CD4-positive, alpha-beta memory T cell (primary cell): ENCODE measurements at regions of chr11 and their contacts with region 1.

Region 1: GRCh38 chr11:35040221-35040942 is 98.6 kb upstream of the CD44 start:
- DNase-seq: peak; percentile 78 to 93 (median 84)
- H3K4me3 ChIP-seq: peak overlapping the region; percentile 31 to 62
- H3K4me3 Mint-ChIP-seq: peak overlapping the region; percentile 80 to 93 (median 88)
- H3K27ac ChIP-seq: peak overlapping the region; percentile 94
- H3K27ac Mint-ChIP-seq: peak overlapping the region; percentile 96 to 99 (median 98)
- H3K4me1 ChIP-seq: peaks cover 68% of the 10 kb centered on the region
- H3K4me1 Mint-ChIP-seq: peaks cover 38 to 69% (median 54%) of the 10 kb centered on the region in 4 donors
- H3K27me3 ChIP-seq: no peaks in the 10 kb centered on the region
- H3K27me3 Mint-ChIP-seq: no peaks in the 10 kb centered on the region

Region 2: DNA sequence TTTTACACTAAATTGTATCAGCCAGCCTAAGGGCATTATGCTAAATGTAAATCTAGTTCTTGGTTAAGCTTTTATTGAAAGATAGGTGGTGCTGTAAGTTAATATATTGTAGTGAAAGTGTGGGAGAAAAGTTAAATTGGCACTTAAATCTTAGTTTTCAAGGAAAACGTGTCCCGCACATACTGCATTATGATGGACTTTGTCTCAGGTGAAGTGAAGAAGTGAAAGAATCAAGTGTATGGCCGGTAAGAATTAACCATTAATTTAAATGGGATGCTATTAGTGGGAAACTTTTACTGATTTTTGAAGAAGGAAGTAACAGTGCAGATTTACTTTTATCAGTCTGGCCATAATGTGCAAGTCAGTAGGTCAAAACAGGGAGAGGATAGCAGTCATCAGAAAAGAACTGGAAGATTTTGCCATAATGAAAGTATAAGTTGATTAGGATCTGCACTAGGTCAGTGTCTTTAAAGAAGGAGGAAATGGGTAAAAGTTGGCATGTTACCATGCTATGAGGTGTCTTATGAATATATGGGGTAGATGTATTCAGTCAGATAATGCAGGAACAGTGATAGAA is 42.3 kb before region 1 on chr11:
- CTCF ChIA-PET with region 1: interaction called, 10 read pairs
- POLR2A ChIA-PET with region 1: interaction called, 7 read pairs
- intact Hi-C with region 1: loop called (anchors 1 kb)
- DNase-seq: peak in 4 of 5 donors; percentile 37 to 48 (median 44)
- H3K4me3 ChIP-seq: no peak overlapping the region
- H3K4me3 Mint-ChIP-seq: peak overlapping the region in 6 of 8 donors; percentile 62 to 78 (median 75)
- H3K27ac ChIP-seq: peak overlapping the region; percentile 45
- H3K27ac Mint-ChIP-seq: peak overlapping the region; percentile 57 to 95 (median 86)
- H3K4me1 ChIP-seq: peaks cover 24% of the 10 kb centered on the region
- H3K4me1 Mint-ChIP-seq: peaks cover 20 to 34% (median 24%) of the 10 kb centered on the region in 4 donors
- H3K27me3 ChIP-seq: no peaks in the 10 kb centered on the region
- H3K27me3 Mint-ChIP-seq: no peaks in the 10 kb centered on the region

Region 3: GRCh38 chr11:35013514-35014233 is 26.7 kb before region 1 on chr11:
- CTCF ChIA-PET with region 1: interaction called, 3 read pairs
- POLR2A ChIA-PET with region 1: interaction called, 26 read pairs
- intact Hi-C with region 1: loop called (anchors 2 kb)
- DNase-seq: peak; percentile 61 to 87 (median 75)
- H3K4me3 ChIP-seq: no peak overlapping the region
- H3K4me3 Mint-ChIP-seq: peak overlapping the region; percentile 11 to 87 (median 71)
- H3K27ac ChIP-seq: peak overlapping the region; percentile 70
- H3K27ac Mint-ChIP-seq: peak overlapping the region; percentile 93 to 100 (median 97)
- H3K4me1 ChIP-seq: peaks cover 26% of the 10 kb centered on the region
- H3K4me1 Mint-ChIP-seq: peaks cover 23 to 57% (median 37%) of the 10 kb centered on the region in 4 donors
- H3K27me3 ChIP-seq: no peaks in the 10 kb centered on the region
- H3K27me3 Mint-ChIP-seq: no peaks in the 10 kb centered on the region

Region 4: DNA sequence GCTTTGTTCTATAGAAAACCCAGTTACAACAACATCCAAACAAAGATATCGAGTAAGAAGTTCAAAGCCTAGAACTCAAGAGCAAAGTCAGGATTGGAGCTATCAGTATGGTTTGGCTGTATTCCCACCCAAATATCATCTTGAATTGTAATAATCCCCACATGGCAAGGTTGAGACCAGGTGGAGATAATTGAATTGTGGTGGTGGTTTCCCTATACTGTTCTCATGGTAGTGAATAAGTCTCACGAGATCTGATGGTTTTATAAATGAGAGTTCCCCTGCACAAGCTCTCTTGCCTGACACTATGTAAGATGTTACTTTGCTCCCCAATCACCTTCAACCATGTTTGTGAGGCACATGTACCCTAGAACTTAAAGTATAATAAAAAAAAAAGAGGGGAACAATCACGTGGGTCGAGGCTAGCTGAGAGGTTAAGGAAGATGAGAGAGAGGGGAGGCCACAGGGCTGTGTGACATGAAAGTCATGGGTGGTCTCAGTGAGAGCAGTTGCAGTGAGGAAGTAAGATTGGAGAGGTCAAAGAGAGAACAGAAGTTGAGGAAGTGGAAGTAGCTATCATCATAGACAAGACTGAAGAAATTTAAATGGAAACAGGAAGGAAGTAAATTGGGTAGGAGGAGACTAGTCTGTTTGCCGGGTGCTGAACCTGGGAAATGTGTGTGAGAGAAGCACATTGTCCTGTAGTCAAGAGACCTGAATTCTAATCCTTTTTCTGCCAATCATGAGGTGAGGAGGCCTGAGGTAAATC is 18.5 kb after region 1 on chr11:
- CTCF ChIA-PET with region 1: interaction called, 4 read pairs
- POLR2A ChIA-PET with region 1: interaction called, 76 read pairs
- intact Hi-C with region 1: no loop called
- DNase-seq: no peak
- H3K4me3 ChIP-seq: no peak overlapping the region
- H3K4me3 Mint-ChIP-seq: peak overlapping the region in 7 of 8 donors; percentile 1 to 71 (median 14)
- H3K27ac ChIP-seq: no peak overlapping the region
- H3K27ac Mint-ChIP-seq: peak overlapping the region; percentile 19 to 90 (median 78)
- H3K4me1 ChIP-seq: peaks cover 40% of the 10 kb centered on the region
- H3K4me1 Mint-ChIP-seq: peaks cover 29 to 46% (median 40%) of the 10 kb centered on the region in 4 donors
- H3K27me3 ChIP-seq: no peaks in the 10 kb centered on the region
- H3K27me3 Mint-ChIP-seq: no peaks in the 10 kb centered on the region

Region 5: DNA sequence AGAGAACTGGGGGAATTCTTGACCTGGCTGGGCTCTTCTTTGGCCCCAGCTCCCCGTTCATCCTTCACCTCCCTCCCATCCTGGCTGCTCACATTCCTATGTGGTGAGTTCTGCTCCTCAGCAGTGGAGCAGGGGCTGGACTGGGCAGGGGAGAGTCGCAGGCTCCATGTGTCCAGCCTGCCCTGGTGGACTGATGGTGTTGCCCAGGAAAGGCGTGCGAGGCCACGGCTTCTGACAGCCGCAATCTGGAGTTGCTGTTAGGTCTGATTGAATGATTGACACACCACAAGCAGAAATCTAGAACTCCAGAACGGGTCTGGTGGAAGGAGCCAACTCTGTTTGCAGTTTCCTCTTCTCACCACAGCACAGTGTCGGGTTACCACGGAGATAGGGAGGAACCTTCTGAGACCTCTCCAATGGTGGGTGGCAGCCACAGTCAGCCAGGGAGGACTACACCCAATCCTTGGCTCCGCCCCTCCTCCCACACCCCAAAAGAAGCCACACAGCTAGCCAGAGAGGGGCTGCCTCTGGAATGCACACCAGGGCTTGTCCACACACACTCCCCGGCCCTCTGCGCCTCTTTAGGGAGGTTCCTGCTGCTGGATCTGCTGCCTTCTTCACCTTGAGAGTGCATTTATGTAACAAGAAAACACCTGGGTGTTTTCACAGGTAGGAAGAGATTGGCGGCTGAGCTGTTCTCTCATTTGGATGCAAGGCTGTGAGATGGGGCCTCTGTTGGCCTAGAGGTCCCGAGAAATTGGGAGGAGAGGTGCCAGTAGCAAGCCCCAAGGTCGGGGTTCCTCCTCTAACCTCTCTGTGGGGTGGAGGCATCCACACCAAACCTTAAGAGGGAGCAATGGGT is 42.2 kb after region 1 on chr11:
- CTCF ChIA-PET with region 1: interaction called, 15 read pairs
- POLR2A ChIA-PET with region 1: interaction called, 253 read pairs
- intact Hi-C with region 1: loop called (anchors 1 kb)
- DNase-seq: peak; percentile 89 to 96 (median 93)
- H3K4me3 ChIP-seq: peak overlapping the region; percentile 50 to 57
- H3K4me3 Mint-ChIP-seq: peak overlapping the region; percentile 78 to 90 (median 84)
- H3K27ac ChIP-seq: peak overlapping the region; percentile 97
- H3K27ac Mint-ChIP-seq: peak overlapping the region; percentile 94 to 99 (median 98)
- H3K4me1 ChIP-seq: peaks cover 85% of the 10 kb centered on the region
- H3K4me1 Mint-ChIP-seq: peaks cover 73 to 100% (median 87%) of the 10 kb centered on the region in 4 donors
- H3K27me3 ChIP-seq: no peaks in the 10 kb centered on the region
- H3K27me3 Mint-ChIP-seq: no peaks in the 10 kb centered on the region

Region 6: DNA sequence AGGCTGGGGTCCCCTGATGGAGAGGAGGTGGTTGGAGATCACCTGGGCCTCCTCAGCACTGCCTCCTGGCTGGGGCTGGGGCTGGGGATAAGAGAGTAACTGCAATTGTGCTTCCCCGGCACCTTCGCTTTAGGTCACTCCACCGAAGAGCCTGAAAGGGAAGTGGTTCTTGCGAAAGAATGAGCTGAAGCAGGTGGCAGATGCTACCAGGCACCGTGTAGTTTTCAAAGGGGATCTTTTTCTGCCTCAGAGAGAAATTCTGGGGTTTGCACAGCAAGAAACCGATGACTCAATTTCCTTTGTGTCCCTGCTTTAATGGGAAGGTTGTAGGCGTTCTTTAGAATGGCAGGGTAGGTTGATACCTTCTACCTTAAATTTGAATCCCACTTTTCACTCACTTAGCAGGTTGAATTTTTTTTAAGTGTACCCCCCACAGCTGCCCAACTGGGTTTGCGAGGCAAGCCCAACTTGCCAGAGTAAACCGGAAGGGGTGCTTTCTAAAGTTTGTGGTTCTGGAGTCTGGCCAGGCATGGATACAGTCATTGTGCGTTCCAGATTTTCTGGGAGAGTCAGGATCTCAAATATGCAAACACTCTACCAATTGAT is 103.9 kb after region 1 on chr11:
- CTCF ChIA-PET with region 1: interaction called, 19 read pairs
- POLR2A ChIA-PET with region 1: interaction called, 211 read pairs
- intact Hi-C with region 1: loop called (anchors 1 kb)
- DNase-seq: peak; percentile 67 to 90 (median 76)
- H3K4me3 ChIP-seq: peak overlapping the region; percentile 55 to 59
- H3K4me3 Mint-ChIP-seq: peak overlapping the region; percentile 83 to 99 (median 98)
- H3K27ac ChIP-seq: peak overlapping the region; percentile 73
- H3K27ac Mint-ChIP-seq: peak overlapping the region; percentile 93 to 100 (median 95)
- H3K4me1 ChIP-seq: peaks cover 72% of the 10 kb centered on the region
- H3K4me1 Mint-ChIP-seq: peaks cover 60 to 88% (median 70%) of the 10 kb centered on the region in 4 donors
- H3K27me3 ChIP-seq: no peaks in the 10 kb centered on the region
- H3K27me3 Mint-ChIP-seq: no peaks in the 10 kb centered on the region

Region 7: GRCh38 chr11:35173011-35173511 is 132.7 kb after region 1 on chr11:
- CTCF ChIA-PET with region 1: no interaction called
- POLR2A ChIA-PET with region 1: interaction called, 87 read pairs
- intact Hi-C with region 1: no loop called
- DNase-seq: peak in 1 of 5 donors; percentile 17
- H3K4me3 ChIP-seq: peak overlapping the region in 1 of 2 donors; percentile 3
- H3K4me3 Mint-ChIP-seq: peak overlapping the region in 7 of 8 donors; percentile 63 to 80 (median 71)
- H3K27ac ChIP-seq: peak overlapping the region; percentile 65
- H3K27ac Mint-ChIP-seq: peak overlapping the region; percentile 82 to 100 (median 93)
- H3K4me1 ChIP-seq: peaks cover 96% of the 10 kb centered on the region
- H3K4me1 Mint-ChIP-seq: peaks cover 86 to 95% (median 91%) of the 10 kb centered on the region in 4 donors
- H3K27me3 ChIP-seq: no peaks in the 10 kb centered on the region
- H3K27me3 Mint-ChIP-seq: no peaks in the 10 kb centered on the region